ENCODE measurements at regions of chr15 and their contacts with region 1.

Region 1: GRCh38 chr15:60520825-60521368 is 42.0 kb upstream of the ICE2 start:
- DNase-seq: peak; percentile 91
- H3K4me3 Mint-ChIP-seq: no peak overlapping the region
- H3K27ac Mint-ChIP-seq: peak overlapping the region; percentile 42
- H3K4me1 Mint-ChIP-seq: peaks cover 42% of the 10 kb centered on the region
- H3K27me3 Mint-ChIP-seq: no peaks in the 10 kb centered on the region

Region 2: DNA sequence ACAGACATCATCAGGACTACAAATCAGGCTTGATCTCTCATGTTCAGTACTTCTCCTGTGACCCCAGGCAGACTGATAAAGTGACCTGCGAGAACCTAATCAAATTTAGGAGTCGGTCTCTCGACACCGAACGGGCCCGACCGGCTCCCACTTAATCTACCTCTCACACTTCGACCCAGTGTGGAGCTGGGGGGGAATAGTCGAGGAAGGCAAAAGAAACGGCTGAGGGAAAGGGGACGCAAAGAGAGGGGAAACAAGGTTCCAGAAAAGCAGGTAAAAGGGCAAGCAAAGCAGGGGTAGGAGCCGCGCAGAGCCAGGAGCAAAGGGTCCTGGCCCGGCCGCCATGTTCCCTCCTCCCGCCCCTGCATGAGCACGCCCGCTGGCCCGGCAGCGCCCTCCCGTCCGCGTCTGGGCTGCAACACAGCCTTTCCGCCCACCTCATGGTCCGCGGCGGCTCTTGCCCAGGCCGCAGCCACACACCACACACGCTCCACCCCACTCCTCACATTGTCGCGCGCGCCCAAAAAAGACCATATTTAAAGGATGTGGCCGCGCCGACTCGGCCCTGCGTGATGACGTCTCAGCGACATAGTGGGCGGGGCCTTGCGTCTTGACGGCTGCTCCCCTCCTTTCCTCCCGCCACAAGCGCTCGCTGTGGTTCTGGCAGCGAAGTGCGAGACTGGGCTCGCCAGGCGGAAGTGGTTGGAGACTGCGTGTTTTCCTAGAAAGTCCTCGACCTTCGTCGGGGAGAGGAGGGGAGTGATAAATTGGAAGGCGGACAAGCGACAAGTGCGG is 42.1 kb before region 1 on chr15 and contains the start of gene ICE2:
- CTCF ChIA-PET with region 1: interaction called, 7 read pairs
- intact Hi-C with region 1: loop called (anchors 1 kb)
- DNase-seq: peak; percentile 98
- H3K4me3 Mint-ChIP-seq: peak within 1 kb of the TSS; percentile 93
- H3K27ac Mint-ChIP-seq: peak within 1 kb of the TSS; percentile 94
- H3K4me1 Mint-ChIP-seq: peaks cover 44% of the 10 kb centered on the region
- H3K27me3 Mint-ChIP-seq: no peaks in the 10 kb centered on the region
- total RNA-seq, gene ICE2: 75.2 to 76.7 TPM

Region 3: DNA sequence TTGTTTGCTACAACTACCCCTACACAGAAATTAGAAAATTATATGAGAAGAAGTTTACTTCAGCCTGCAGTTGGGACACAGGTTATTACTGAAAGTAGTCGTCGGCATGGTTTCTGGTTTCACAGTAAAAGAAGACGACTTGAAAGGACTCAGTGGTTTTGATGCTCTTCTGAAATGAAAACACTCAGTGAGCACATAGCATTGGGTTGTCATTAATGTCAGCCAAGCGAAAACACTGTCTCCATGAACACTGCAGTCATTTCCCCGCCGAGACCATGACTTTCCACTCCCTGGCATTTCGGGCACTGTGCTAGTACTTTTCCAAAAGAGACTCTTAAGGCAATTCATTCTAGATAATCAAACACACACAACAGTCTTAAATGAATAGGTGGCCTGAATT is 27.2 kb after region 1 on chr15:
- CTCF ChIA-PET with region 1: interaction called, 15 read pairs
- intact Hi-C with region 1: loop called (anchors 1 kb)
- DNase-seq: peak; percentile 83
- H3K4me3 Mint-ChIP-seq: peak overlapping the region; percentile 39
- H3K27ac Mint-ChIP-seq: peak overlapping the region; percentile 80
- H3K4me1 Mint-ChIP-seq: peaks cover 92% of the 10 kb centered on the region
- H3K27me3 Mint-ChIP-seq: no peaks in the 10 kb centered on the region

Region 4: DNA sequence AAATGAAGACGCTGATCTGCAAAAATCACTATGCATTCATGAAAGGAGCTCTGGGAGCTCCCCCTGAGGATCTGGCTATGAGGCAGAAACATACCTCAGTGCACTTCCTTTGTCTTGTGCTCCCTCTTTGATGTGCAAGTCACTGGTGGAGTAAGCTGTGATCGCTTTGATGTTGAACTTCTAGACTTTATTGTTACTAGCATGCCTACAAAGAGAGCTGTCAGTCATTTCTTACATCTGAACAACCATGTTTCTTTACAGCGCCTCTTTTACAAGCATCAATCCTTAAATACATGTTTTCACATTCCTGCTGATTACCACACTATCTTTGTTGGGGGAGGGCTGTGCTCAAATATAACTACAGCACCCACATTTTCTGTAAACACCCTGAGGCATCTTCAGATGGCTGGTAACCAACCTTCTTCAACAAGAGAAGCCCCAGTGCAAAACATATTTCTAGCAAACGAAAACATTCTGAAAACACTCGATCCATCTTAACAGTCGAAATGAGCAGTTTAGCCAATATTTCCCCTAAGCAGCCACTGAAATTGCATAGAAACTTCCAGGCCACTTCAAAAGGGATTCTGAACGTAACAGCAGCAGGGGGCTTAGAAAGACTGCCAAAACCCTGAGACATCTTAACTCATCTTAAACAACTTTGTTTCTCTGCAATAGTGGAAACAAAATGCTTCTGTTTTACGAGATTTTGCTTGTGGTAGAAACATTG is 59.9 kb after region 1 on chr15:
- CTCF ChIA-PET with region 1: interaction called, 16 read pairs
- intact Hi-C with region 1: loop called (anchors 1 kb)
- DNase-seq: peak; percentile 73
- H3K4me3 Mint-ChIP-seq: peak overlapping the region; percentile 60
- H3K27ac Mint-ChIP-seq: peak overlapping the region; percentile 85
- H3K4me1 Mint-ChIP-seq: peaks cover 90% of the 10 kb centered on the region
- H3K27me3 Mint-ChIP-seq: no peaks in the 10 kb centered on the region

Region 5: DNA sequence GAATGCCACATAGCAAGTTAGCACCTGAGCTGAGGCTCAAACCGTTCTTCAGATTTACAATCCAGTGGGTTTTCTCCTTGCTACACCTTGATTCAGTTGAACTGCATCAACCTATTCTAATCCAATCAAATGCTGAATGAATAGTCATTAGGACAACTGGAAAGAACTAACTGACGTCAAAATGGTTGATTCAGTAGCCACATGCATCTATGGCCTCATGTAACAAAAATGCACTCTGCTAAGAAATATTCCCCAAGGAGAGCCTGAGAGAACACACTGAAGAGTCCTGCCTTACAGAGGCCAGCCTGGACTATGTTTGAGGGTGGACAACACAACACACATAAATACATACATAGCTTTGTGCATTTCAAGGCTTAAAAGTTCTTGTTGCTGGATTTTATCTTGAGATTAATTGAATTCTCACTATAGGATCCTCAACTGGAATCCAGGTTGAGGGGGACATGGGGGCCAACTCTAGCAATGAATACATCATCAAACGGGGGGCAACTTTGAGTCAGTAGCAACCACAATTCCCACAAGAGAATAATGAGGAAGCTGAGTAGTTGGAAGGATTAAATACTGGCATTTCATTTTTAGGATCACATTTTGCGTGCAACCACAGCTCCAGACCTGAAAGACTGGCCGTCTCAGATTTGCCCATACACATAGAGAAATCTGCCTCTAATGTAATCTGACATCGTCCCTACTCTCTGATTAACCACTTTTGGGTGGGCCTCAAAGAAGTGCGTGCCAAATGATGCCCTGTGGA is 238.2 kb after region 1 on chr15:
- CTCF ChIA-PET with region 1: no interaction called
- intact Hi-C with region 1: no loop called
- DNase-seq: no peak
- H3K4me3 Mint-ChIP-seq: no peak overlapping the region
- H3K27ac Mint-ChIP-seq: no peak overlapping the region
- H3K4me1 Mint-ChIP-seq: peaks cover 29% of the 10 kb centered on the region
- H3K27me3 Mint-ChIP-seq: no peaks in the 10 kb centered on the region

Region 6: GRCh38 chr15:61186905-61187741 is 666.2 kb after region 1 on chr15:
- CTCF ChIA-PET with region 1: no interaction called
- intact Hi-C with region 1: loop called (anchors 10 kb)
- DNase-seq: no peak
- H3K4me3 Mint-ChIP-seq: no peak overlapping the region
- H3K27ac Mint-ChIP-seq: no peak overlapping the region
- H3K4me1 Mint-ChIP-seq: no peaks in the 10 kb centered on the region
- H3K27me3 Mint-ChIP-seq: peaks cover 12% of the 10 kb centered on the region

Measured in activated naive CD4-positive, alpha-beta T cell treated with anti-CD3 and anti-CD28 coated beads for 36 hours (primary cell).